GM12878 (cell line): ENCODE measurements at regions of chr19 and their contacts with region 1.

Region 1: GRCh38 chr19:17292286-17293097 is 10.7 kb downstream of the ABHD8 start:
- DNase-seq: peak; percentile 46
- ATAC-seq: peak; percentile 97
- H3K4me3 ChIP-seq: peak overlapping the region; percentile 86
- H3K27ac ChIP-seq: peak overlapping the region; percentile 35
- H3K4me1 ChIP-seq: peaks cover 4% of the 10 kb centered on the region; the same call in 1 of the 2 replicates
- H3K27me3 ChIP-seq: no peaks in the 10 kb centered on the region
- CTCF ChIP-seq: peak; percentile 84 to 95 (median 85)
- EP300 ChIP-seq: no peak
- POLR2A ChIP-seq: peak; percentile 82
- RAD21 ChIP-seq: peak; percentile 94

Region 2: DNA sequence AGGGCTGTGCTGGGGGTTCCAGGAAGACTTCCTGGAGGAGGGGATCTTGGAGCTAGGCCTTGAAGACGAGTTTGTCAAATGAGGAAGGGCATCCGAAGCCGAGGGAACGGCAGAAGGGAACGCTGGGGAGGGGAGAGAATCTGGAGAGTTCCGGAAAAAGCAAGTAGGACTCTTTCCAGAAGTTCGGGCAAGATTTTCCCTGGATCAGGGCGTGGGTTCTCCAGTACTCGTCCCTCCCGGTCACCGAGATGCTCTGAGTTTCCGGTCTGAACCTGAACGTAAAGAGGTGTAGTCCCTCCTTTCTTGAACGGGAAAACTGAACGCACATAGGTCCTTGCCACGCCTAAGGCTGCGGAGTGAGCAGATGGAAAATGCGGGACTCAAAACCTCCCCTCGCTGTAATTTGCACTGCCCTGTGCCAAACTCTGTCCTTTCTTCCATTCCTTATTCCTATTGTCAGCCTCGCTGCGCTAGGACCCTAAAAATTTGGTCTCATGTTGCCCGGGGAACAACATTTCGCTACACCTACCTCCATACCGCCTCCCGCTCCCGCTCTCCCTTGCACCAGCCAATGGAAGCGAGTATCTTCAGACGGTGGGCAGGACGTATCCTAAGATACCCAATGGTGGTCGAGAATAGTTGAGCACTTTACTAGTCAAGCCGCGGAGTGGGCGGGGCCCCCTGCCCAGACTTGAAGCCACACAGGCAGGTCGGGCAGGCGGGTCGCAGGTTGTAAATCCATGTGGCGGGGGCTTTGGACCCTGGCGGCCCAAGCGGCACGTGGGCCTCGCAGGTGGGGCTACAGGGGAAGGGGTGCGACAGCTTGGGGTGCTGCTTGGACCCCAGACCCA is 44.6 kb after region 1 on chr19 and contains the start of gene GTPBP3:
- CTCF ChIA-PET with region 1: interaction called, 6 read pairs
- POLR2A ChIA-PET with region 1: interaction called, 8 read pairs
- RAD21 ChIA-PET with region 1: interaction called, 3 read pairs
- SMC1A ChIA-PET with region 1: no interaction called
- in situ Hi-C with region 1: no loop called
- intact Hi-C with region 1: loop called (anchors 5 kb)
- DNase-seq: peak; percentile 96
- ATAC-seq: peak; percentile 89
- H3K4me3 ChIP-seq: peak within 1 kb of the TSS; percentile 100
- H3K27ac ChIP-seq: peak within 1 kb of the TSS; percentile 84
- H3K4me1 ChIP-seq: peaks cover 21% of the 10 kb centered on the region
- H3K27me3 ChIP-seq: no peaks in the 10 kb centered on the region
- CTCF ChIP-seq: no peak
- EP300 ChIP-seq: no peak
- POLR2A ChIP-seq: peak; percentile 87
- RAD21 ChIP-seq: no peak
- polyA plus RNA-seq, gene GTPBP3: 2.9 to 4.1 TPM